ENCODE measurements at regions of chr18 and their contacts with region 1.

Region 1: DNA sequence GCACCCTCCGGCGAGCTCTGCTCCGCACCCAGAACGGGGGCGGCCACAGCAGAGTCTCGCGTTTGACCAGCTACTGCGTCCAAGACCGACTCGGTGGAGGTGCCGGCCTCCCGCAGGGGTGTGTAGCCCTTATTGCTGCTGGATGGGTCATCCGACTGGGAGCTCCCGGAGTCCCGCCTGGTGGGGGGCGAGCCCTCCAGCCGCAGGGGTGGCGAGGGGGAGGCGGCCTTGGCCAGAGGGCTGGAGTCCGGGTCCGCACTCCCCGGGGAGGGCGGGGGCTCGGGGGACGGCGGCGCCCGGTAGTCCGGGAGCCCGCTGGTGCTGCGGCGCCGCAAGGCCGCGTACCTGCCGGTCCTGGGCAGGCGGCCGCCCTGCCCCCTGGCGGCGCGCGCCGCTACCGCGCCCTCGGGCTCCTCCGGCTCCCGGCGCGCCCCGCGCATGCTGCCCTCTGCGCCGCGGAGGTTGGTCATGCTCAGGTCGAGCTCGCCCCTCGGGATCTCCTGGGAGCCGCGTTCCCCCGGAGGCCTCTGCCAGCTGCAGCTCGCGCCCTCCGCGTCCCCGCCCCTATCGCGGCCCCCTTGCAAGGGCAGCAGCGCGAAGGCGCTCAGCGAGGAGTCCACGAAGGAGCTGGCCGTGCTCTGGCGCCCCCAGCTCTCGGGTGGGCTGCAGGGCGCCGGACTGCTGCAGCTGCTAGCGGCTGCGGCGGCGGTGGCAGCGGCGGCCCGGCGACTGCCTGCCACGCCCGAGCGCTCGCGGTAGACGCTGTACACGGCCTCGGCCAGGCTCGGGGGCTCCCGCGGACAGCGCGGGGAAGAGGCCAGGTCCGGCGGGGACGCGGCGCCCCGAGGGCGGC is 4.8 kb downstream of the TMEM200C start:
- DNase-seq: peak in 1 of 5 donors; percentile 8
- H3K4me3 ChIP-seq: no peak overlapping the region
- H3K4me3 Mint-ChIP-seq: peak overlapping the region in 1 of 8 donors; percentile 65
- H3K27ac ChIP-seq: no peak overlapping the region
- H3K27ac Mint-ChIP-seq: no peak overlapping the region
- H3K4me1 ChIP-seq: no peaks in the 10 kb centered on the region
- H3K4me1 Mint-ChIP-seq: peaks cover 1 to 13% (median 6%) of the 10 kb centered on the region in 4 donors
- H3K27me3 ChIP-seq: peaks cover 17% of the 10 kb centered on the region
- H3K27me3 Mint-ChIP-seq: peaks cover 41 to 43% of the 10 kb centered on the region in 2 donors

Region 2: GRCh38 chr18:5073026-5073944 is 817.3 kb before region 1 on chr18:
- CTCF ChIA-PET with region 1: interaction called, 6 read pairs
- POLR2A ChIA-PET with region 1: no interaction called
- intact Hi-C with region 1: loop called (anchors 10 kb)
- DNase-seq: peak in 3 of 5 donors; percentile 14 to 23 (median 15)
- H3K4me3 ChIP-seq: no peak overlapping the region
- H3K4me3 Mint-ChIP-seq: no peak overlapping the region
- H3K27ac ChIP-seq: no peak overlapping the region
- H3K27ac Mint-ChIP-seq: no peak overlapping the region
- H3K4me1 ChIP-seq: no peaks in the 10 kb centered on the region
- H3K4me1 Mint-ChIP-seq: no peaks in the 10 kb centered on the region
- H3K27me3 ChIP-seq: no peaks in the 10 kb centered on the region
- H3K27me3 Mint-ChIP-seq: peaks cover 2 to 3% of the 10 kb centered on the region in 2 donors

Region 3: DNA sequence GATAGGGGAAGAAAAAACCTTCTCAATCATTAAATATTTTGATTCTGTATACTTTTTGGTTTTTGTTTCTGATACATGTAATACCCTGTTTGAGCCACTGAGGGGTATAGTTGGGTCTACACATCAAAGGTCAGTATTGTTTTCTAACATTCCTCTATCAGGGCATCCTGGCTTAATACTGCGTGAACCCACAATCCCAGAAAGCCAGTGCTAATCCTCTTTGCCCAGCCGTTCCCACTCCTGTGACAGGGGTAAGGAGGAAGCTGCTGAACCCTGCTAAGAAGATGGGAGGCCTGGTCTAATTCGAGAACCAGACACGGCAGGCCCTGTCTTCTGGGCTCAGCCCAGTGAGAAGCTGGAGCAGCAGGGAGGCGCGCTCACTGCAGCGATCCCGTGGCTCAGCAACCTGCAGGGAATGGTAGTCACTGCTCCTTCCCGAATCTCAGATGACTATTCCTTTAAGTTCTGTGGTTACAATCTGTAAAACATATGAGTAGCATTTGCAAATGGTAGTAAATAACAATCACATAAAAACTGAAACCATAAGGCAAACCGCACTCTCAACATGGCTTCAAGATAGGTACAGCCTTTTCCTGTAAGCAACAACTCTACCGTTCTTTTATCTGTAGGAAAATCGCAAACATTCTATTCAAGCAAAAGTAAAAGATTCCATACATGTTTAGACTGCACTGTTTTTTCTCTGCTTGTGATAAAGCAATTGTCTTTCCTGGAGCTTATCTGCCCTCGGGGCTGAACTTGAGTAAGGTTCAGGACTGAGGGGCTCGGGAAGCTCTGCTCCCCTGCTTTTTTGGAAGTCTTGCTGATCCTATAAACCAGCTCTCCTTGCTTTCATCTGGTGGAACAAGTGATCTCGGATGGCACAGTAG is 433.7 kb before region 1 on chr18:
- CTCF ChIA-PET with region 1: no interaction called
- POLR2A ChIA-PET with region 1: no interaction called
- intact Hi-C with region 1: loop called (anchors 2 kb)
- DNase-seq: peak in 4 of 5 donors; percentile 2 to 23 (median 6)
- H3K4me3 ChIP-seq: peak overlapping the region in 1 of 2 donors; percentile 17
- H3K4me3 Mint-ChIP-seq: peak overlapping the region; percentile 40 to 81 (median 74)
- H3K27ac ChIP-seq: no peak overlapping the region
- H3K27ac Mint-ChIP-seq: peak overlapping the region; percentile 54 to 86 (median 77)
- H3K4me1 ChIP-seq: no peaks in the 10 kb centered on the region
- H3K4me1 Mint-ChIP-seq: peaks cover 2 to 13% (median 11%) of the 10 kb centered on the region in 4 donors
- H3K27me3 ChIP-seq: peaks cover 5% of the 10 kb centered on the region
- H3K27me3 Mint-ChIP-seq: no peaks in the 10 kb centered on the region

Region 4: DNA sequence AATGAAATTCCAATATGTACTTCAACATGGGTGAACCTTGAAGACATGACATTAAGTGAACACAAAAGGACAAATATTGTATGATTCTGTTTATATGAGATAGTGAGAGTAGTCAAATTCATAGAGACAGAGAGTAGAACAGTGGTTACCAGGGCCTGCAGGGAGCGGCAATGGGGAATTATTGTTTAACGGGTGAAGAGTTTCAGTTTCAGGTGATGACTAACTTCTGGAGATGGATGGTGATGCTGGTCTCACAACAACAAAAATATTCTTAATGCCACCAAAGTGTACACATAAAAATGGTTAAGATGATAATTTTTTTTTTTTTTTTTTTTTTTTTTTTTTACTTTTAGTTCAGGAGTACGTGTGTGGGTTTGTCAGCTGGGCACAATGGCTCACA is 114.1 kb after region 1 on chr18:
- CTCF ChIA-PET with region 1: no interaction called
- POLR2A ChIA-PET with region 1: no interaction called
- intact Hi-C with region 1: no loop called
- DNase-seq: no peak
- H3K4me3 ChIP-seq: no peak overlapping the region
- H3K4me3 Mint-ChIP-seq: peak overlapping the region in 6 of 8 donors; percentile 7 to 71 (median 42)
- H3K27ac ChIP-seq: no peak overlapping the region
- H3K27ac Mint-ChIP-seq: peak overlapping the region in 1 of 7 donors; percentile 49
- H3K4me1 ChIP-seq: no peaks in the 10 kb centered on the region
- H3K4me1 Mint-ChIP-seq: peaks cover 6 to 12% (median 7%) of the 10 kb centered on the region in 4 donors
- H3K27me3 ChIP-seq: no peaks in the 10 kb centered on the region
- H3K27me3 Mint-ChIP-seq: no peaks in the 10 kb centered on the region

Measured in CD4-positive, alpha-beta memory T cell (primary cell).